ENCODE measurements at regions of chr6 and their contacts with region 1.

Region 1: GRCh38 chr6:152201120-152201519 is 393.6 kb downstream of the ESR1 start:
- DNase-seq: no peak
- H3K4me3 ChIP-seq: no peak overlapping the region
- H3K4me3 Mint-ChIP-seq: no peak overlapping the region
- H3K27ac ChIP-seq: no peak overlapping the region
- H3K27ac Mint-ChIP-seq: no peak overlapping the region
- H3K4me1 ChIP-seq: peaks cover 8% of the 10 kb centered on the region
- H3K4me1 Mint-ChIP-seq: peaks cover 7 to 19% (median 18%) of the 10 kb centered on the region in 3 donors
- H3K27me3 ChIP-seq: no peaks in the 10 kb centered on the region
- H3K27me3 Mint-ChIP-seq: peaks cover 0 to 2% of the 10 kb centered on the region in 2 donors

Region 2: GRCh38 chr6:152100183-152100618 is 100.9 kb before region 1 on chr6:
- CTCF ChIA-PET with region 1: no interaction called
- POLR2A ChIA-PET with region 1: interaction called, 13 read pairs
- DNase-seq: no peak
- H3K4me3 ChIP-seq: no peak overlapping the region
- H3K4me3 Mint-ChIP-seq: no peak overlapping the region
- H3K27ac ChIP-seq: no peak overlapping the region
- H3K27ac Mint-ChIP-seq: peak overlapping the region in 1 of 8 donors; percentile 0
- H3K4me1 ChIP-seq: no peaks in the 10 kb centered on the region
- H3K4me1 Mint-ChIP-seq: no peaks in the 10 kb centered on the region
- H3K27me3 ChIP-seq: no peaks in the 10 kb centered on the region
- H3K27me3 Mint-ChIP-seq: no peaks in the 10 kb centered on the region

Region 3: GRCh38 chr6:152450512-152450911 is 249.4 kb after region 1 on chr6:
- CTCF ChIA-PET with region 1: no interaction called
- POLR2A ChIA-PET with region 1: no interaction called
- DNase-seq: no peak
- H3K4me3 ChIP-seq: no peak overlapping the region
- H3K4me3 Mint-ChIP-seq: no peak overlapping the region
- H3K27ac ChIP-seq: no peak overlapping the region
- H3K27ac Mint-ChIP-seq: no peak overlapping the region
- H3K4me1 ChIP-seq: no peaks in the 10 kb centered on the region
- H3K4me1 Mint-ChIP-seq: no peaks in the 10 kb centered on the region
- H3K27me3 ChIP-seq: no peaks in the 10 kb centered on the region
- H3K27me3 Mint-ChIP-seq: no peaks in the 10 kb centered on the region

Measured in CD8-positive, alpha-beta memory T cell (primary cell).